ENCODE measurements at regions of chr10 and their contacts with region 1.

Region 1: GRCh38 chr10:124530215-124530665 is 68.6 kb downstream of the LHPP start:
- ATAC-seq: peak; percentile 92 to 99 (median 95)
- H3K4me3 ChIP-seq: no peak overlapping the region
- H3K27ac ChIP-seq: no peak overlapping the region
- H3K4me1 ChIP-seq: peaks cover 2 to 6% of the 10 kb centered on the region in 2 donors

Region 2: GRCh38 chr10:123913688-123914268 is 616.5 kb before region 1 on chr10:
- in situ Hi-C with region 1: no loop called
- ATAC-seq: peak in 4 of 8 experiments; percentile 12 to 57 (median 32)
- H3K4me3 ChIP-seq: no peak overlapping the region
- H3K27ac ChIP-seq: no peak overlapping the region
- H3K4me1 ChIP-seq: peaks cover 0 to 23% of the 10 kb centered on the region in 2 donors

Region 3: DNA sequence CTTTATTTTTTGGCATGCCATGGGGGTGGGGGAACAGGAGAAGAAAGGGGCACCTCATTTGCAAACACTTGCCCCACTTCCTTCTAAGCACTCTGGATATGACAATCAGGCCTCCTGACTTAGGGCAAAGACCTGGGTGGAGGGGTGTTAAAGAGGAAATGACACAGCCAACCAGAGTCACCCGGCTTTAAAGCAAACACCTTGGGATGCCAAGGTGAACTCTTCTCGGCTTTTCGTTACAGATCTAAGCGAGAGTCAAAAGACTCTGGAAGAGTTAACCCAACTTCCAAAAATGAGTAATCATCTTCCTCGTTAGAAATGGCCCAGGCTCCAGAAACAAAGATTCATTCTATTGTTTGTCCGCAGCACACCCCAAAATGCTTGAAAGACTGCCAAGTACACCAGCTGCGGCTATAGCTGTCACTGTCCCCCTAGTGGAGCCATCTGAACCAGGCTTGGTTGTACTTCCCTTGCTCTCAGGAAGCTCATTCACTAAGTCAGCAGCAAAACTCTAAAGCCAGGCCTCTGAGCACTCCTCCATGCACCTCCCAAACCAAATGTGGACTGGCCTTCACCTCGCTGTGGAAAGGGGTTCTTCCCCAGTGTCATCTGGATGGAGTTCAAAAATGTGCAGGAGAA is 189.1 kb after region 1 on chr10:
- in situ Hi-C with region 1: loop called in 1 of 9 experiments (anchors 25 kb)
- ATAC-seq: peak in 1 of 8 experiments; percentile 20
- H3K4me3 ChIP-seq: no peak overlapping the region
- H3K27ac ChIP-seq: no peak overlapping the region
- H3K4me1 ChIP-seq: peaks cover 52 to 58% of the 10 kb centered on the region in 2 donors

Region 4: GRCh38 chr10:124741281-124741921 is 211.2 kb after region 1 on chr10:
- in situ Hi-C with region 1: loop called in 5 of 9 experiments (anchors 10 to 25 kb)
- ATAC-seq: peak; percentile 7 to 62 (median 48)
- H3K4me3 ChIP-seq: peak overlapping the region in 3 of 5 donors; percentile 1 to 73 (median 59)
- H3K27ac ChIP-seq: no peak overlapping the region
- H3K4me1 ChIP-seq: peaks cover 60 to 61% of the 10 kb centered on the region in 2 donors

Region 5: GRCh38 chr10:125060826-125061556 is 530.8 kb after region 1 on chr10:
- in situ Hi-C with region 1: loop called in 1 of 9 experiments (anchors 25 kb)
- ATAC-seq: peak; percentile 34 to 88 (median 54)
- H3K4me3 ChIP-seq: no peak overlapping the region
- H3K27ac ChIP-seq: peak overlapping the region in 1 of 2 donors; percentile 63
- H3K4me1 ChIP-seq: peaks cover 40 to 55% of the 10 kb centered on the region in 2 donors

Measured in motor neuron (in vitro differentiated cells).